ENCODE measurements at regions of chr17 and their contacts with region 1.

Region 1: GRCh38 chr17:57995076-57995956 is 7.3 kb upstream of the VEZF1 start:
- DNase-seq: peak; percentile 85
- H3K4me3 Mint-ChIP-seq: no peak overlapping the region
- H3K27ac Mint-ChIP-seq: peak overlapping the region; percentile 50
- H3K4me1 Mint-ChIP-seq: peaks cover 6% of the 10 kb centered on the region
- H3K27me3 Mint-ChIP-seq: no peaks in the 10 kb centered on the region
- CTCF ChIP-seq: peak; percentile 70

Region 2: DNA sequence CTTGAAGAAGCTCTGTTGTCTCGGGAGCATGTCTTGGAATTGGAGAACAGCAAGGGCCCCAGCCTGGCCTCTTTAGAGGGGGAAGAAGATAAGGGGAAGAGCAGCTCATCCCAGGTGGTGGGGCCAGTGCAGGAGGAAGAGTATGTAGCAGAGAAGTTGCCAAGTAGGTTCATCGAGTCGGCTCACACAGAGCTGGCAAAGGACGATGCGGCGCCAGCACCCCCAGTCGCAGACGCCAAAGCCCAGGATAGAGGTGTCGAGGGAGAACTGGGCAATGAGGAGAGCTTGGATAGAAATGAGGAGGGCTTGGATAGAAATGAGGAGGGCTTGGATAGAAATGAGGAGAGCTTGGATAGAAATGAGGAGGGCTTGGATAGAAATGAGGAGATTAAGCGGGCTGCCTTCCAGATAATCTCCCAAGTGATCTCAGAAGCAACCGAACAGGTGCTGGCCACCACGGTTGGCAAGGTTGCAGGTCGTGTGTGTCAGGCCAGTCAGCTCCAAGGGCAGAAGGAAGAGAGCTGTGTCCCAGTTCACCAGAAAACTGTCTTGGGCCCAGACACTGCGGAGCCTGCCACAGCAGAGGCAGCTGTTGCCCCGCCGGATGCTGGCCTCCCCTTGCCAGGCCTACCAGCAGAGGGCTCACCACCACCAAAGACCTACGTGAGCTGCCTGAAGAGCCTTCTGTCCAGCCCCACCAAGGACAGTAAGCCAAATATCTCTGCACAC is 889.0 kb before region 1 on chr17:
- CTCF ChIA-PET with region 1: interaction called, 3 read pairs
- POLR2A ChIA-PET with region 1: no interaction called
- intact Hi-C with region 1: loop called (anchors 10 kb)
- DNase-seq: peak; percentile 25
- H3K4me3 Mint-ChIP-seq: no peak overlapping the region
- H3K27ac Mint-ChIP-seq: no peak overlapping the region
- H3K4me1 Mint-ChIP-seq: peaks cover 28% of the 10 kb centered on the region
- H3K27me3 Mint-ChIP-seq: no peaks in the 10 kb centered on the region
- CTCF ChIP-seq: no peak

Region 3: DNA sequence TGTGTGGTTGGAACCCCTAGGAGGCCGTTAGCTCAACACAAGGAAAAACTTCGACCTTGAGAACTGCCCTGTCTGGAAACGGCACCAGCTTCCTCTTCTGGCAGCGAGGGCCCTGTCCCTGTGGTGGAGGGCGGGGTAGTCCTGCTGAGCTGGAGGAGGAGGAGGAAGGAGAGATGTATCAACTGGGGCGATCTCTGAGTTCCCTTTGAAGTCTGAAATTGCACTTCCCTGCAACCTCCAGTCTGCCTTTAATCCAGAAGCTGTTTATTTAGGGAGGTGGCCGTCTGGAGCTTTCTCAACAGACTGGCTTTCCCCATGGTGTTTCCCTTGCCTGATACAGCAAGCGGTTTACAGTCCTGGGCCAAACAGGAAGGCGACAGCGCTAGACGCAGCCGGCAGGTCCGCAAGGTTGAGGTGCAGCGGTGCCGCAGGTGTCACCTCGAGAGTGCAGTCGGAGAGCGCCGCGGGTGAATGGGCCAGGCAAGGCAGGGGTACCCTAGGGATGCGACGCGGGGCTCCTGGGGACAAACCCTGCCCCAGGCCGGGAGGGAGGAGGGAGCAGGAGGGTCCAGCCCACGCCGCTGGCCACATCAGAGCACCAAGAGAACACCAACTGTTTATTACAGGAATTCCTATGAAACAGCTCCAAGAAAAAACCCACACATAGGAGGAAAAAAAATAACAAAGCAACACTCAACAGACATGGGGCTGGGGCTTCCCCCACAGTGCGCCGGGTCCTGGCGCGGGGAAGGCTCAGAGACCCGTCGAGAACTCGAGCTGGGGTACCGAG is 134.1 kb before region 1 on chr17:
- CTCF ChIA-PET with region 1: interaction called, 418 read pairs
- POLR2A ChIA-PET with region 1: interaction called, 40 read pairs
- intact Hi-C with region 1: loop called (anchors 1 kb)
- DNase-seq: no peak
- H3K4me3 Mint-ChIP-seq: no peak overlapping the region
- H3K27ac Mint-ChIP-seq: no peak overlapping the region
- H3K4me1 Mint-ChIP-seq: peaks cover 14% of the 10 kb centered on the region
- H3K27me3 Mint-ChIP-seq: no peaks in the 10 kb centered on the region
- CTCF ChIP-seq: no peak

Region 4: DNA sequence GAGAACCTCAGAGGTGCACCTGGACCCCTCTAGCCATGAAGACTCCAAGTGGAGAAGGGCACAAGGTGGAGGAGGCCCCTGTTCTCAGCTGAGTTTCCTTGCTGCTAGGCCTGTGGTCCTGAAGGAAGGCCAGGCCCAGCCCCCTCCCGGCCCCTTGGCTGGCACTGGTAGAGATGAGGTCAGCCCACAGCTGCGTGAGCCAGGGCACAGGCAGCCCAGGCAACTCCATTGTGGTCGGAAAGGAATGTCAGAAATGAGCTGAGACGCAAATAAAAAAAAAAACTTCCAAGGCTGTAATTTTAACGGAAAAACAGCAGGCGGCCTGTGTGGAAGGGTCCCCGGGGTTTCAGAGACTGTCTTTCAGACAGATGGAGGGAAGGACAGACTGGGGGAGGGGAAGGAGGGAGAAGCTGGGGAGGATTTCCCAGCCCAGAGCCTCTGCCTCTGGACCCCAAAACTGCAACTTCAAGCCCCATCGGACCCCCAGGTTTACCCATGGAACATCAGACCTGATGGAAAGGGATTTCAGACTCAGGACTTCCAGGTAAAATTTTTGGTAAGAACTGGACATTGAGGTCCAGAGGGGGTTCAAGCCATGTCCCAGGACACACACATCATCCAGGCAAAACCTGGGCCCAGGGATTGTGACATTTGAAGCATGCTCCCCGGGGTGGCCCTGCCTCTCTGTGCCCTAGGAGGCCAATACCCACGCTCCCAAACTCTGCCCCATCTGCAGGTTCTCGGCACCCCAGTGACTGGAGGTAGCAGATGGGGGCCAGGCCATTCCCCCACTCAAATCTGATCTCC is 119.8 kb before region 1 on chr17:
- CTCF ChIA-PET with region 1: interaction called, 36 read pairs
- POLR2A ChIA-PET with region 1: interaction called, 12 read pairs
- intact Hi-C with region 1: loop called (anchors 1 kb)
- DNase-seq: peak; percentile 94
- H3K4me3 Mint-ChIP-seq: peak overlapping the region; percentile 41
- H3K27ac Mint-ChIP-seq: peak overlapping the region; percentile 51
- H3K4me1 Mint-ChIP-seq: peaks cover 45% of the 10 kb centered on the region
- H3K27me3 Mint-ChIP-seq: no peaks in the 10 kb centered on the region
- CTCF ChIP-seq: peak; percentile 52

Region 5: GRCh38 chr17:57946798-57947358 is 48.4 kb before region 1 on chr17:
- CTCF ChIA-PET with region 1: interaction called, 47 read pairs
- POLR2A ChIA-PET with region 1: interaction called, 6 read pairs
- intact Hi-C with region 1: no loop called
- DNase-seq: peak; percentile 56
- H3K4me3 Mint-ChIP-seq: peak overlapping the region; percentile 68
- H3K27ac Mint-ChIP-seq: peak overlapping the region; percentile 49
- H3K4me1 Mint-ChIP-seq: peaks cover 46% of the 10 kb centered on the region
- H3K27me3 Mint-ChIP-seq: no peaks in the 10 kb centered on the region
- CTCF ChIP-seq: no peak

Region 6: DNA sequence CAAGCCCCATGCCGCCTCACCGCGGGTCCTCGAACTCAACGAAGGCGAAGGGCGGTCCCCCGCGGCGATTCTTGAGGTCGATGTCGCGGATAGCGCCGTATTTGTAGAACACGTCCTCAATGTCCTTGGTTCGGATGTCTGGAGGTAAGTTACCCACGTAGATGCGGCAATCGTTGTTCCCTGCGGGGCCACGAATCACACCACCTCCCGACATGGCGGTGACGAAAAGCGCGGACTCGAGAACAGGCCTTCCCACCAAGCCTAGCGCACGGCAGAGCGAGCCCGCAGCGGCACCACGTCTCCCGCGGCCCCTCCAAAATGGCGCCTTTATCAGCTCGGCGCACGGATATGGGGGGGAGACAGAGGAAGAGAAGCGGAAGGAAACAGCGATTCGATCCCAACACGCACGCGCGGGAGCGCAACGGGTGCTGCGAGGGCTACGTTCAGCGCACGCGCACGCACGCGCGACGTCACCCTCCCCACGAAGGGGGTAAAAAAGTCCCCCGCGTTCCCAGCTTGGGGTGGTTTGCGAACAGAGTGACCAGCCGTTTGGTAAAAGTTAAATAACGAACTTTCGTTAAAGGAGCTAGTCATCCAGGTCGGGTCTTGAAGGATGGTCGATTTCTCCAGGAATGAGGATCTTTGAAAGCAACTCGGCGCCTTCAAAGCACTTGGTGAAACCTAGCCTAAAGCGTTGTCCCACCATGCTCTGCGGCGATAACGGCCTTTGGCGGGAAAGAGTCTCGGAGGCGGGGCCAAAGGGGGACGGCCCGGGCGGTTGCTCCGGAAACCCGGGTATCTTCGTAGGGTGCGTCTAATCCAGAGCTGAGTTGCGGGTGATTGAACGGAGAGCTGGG is 11.8 kb after region 1 on chr17 and contains the start of gene SRSF1:
- CTCF ChIA-PET with region 1: interaction called, 3 read pairs
- POLR2A ChIA-PET with region 1: interaction called, 62 read pairs
- intact Hi-C with region 1: no loop called
- DNase-seq: peak; percentile 97
- H3K4me3 Mint-ChIP-seq: peak within 1 kb of the TSS; percentile 99
- H3K27ac Mint-ChIP-seq: peak within 1 kb of the TSS; percentile 99
- H3K4me1 Mint-ChIP-seq: peaks cover 27% of the 10 kb centered on the region
- H3K27me3 Mint-ChIP-seq: no peaks in the 10 kb centered on the region
- CTCF ChIP-seq: no peak
- total RNA-seq, gene SRSF1: 381 and 493 TPM in 2 replicates

Region 7: GRCh38 chr17:58337600-58338453 is 342.5 kb after region 1 on chr17:
- CTCF ChIA-PET with region 1: no interaction called
- POLR2A ChIA-PET with region 1: no interaction called
- intact Hi-C with region 1: no loop called
- DNase-seq: peak; percentile 62
- H3K4me3 Mint-ChIP-seq: no peak overlapping the region
- H3K27ac Mint-ChIP-seq: no peak overlapping the region
- H3K4me1 Mint-ChIP-seq: no peaks in the 10 kb centered on the region
- H3K27me3 Mint-ChIP-seq: no peaks in the 10 kb centered on the region
- CTCF ChIP-seq: no peak

Measured in MCF 10A (cell line).